ENCODE measurements at regions of chr13 and their contacts with region 1.

Region 1: DNA sequence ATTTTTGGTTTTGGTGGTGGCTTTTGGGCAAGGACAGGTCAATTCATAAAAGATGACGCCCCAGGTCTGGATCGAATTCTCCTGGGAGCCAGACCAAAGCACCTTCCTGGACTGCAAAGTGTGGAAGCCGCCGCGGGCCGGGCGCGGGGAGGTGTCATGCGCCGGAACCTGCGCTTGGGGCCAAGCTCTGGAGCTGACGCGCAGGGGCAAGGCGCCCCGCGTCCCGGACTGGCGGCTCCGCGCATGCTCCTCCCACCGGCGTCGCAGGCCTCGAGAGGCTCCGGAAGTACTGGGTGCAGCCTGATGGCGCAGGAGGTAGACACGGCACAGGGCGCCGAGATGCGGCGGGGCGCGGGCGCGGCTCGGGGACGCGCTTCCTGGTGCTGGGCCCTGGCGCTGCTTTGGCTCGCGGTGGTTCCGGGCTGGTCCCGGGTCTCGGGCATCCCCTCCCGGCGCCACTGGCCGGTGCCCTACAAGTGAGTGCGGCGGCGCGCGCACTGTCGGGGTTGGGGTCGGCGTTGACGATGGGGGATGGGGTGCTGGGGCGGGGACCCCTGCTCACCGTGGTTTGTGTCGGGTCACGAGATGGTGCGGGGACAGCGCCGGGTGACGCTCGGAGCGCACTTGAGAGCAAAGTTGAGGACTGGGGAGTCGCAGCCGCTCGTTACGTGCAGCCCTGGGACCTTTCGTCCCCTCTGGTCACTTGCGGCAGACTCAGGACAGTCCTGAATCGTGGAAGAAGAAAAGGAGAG is at the start of gene CLN5:
- DNase-seq: peak; percentile 85 to 98 (median 96)
- ATAC-seq: peak; percentile 90 to 95 (median 92)
- H3K4me3 ChIP-seq: peak within 1 kb of the TSS; percentile 79
- H3K4me3 Mint-ChIP-seq: peak within 1 kb of the TSS; percentile 91 to 97 (median 95)
- H3K27ac ChIP-seq: peak within 1 kb of the TSS; percentile 97
- H3K27ac Mint-ChIP-seq: peak within 1 kb of the TSS; percentile 98 to 99
- H3K4me1 ChIP-seq: peaks cover 20 to 23% of the 10 kb centered on the region in 2 experiments
- H3K4me1 Mint-ChIP-seq: peaks cover 33 to 55% (median 49%) of the 10 kb centered on the region in 3 donors
- H3K27me3 ChIP-seq: peaks cover 0 to 13% of the 10 kb centered on the region in 2 experiments
- H3K27me3 Mint-ChIP-seq: peaks cover under 1 to 5% of the 10 kb centered on the region in 2 donors
- total RNA-seq, gene CLN5: 18.1 to 29.5 (median 21.7) TPM

Region 2: DNA sequence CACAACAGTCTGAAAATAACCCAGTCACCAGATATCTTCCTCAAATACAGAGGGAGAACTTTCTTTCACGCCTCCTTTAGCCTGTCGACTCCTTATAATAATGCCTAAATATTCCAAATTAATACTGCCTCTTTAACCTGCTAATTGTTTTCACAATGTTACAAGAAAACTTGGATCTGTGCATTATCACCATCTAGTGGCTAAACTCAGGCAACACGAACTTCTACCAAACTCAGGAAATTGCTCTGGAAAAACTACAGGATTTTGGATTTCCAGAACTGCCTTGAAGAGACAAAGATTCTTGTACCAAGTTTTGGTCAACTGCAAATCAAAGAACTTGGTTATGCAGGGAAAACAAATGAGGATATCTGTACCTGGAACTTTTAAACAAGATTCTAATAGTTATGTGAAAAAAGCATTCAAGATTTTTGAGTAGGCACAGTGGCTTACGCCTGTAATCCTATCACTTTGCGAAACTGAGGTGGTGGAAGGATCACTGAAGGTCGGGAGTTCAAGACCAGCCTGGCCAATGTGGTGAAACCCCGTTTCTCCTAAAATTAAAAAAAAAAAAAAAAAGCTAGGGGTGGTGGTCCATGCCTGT is 10.7 kb after region 1 on chr13:
- CTCF ChIA-PET with region 1: interaction called, 3 to 23 read pairs
- POLR2A ChIA-PET with region 1: interaction called, 4 to 5 read pairs
- DNase-seq: peak in 1 of 35 experiments; percentile 47
- ATAC-seq: no peak
- H3K4me3 ChIP-seq: no peak overlapping the region
- H3K4me3 Mint-ChIP-seq: peak overlapping the region in 1 of 3 donors; percentile 22
- H3K27ac ChIP-seq: no peak overlapping the region
- H3K27ac Mint-ChIP-seq: peak overlapping the region; percentile 16 to 82
- H3K4me1 ChIP-seq: no peaks in the 10 kb centered on the region
- H3K4me1 Mint-ChIP-seq: peaks cover 33 to 52% (median 46%) of the 10 kb centered on the region in 3 donors
- H3K27me3 ChIP-seq: no peaks in the 10 kb centered on the region
- H3K27me3 Mint-ChIP-seq: no peaks in the 10 kb centered on the region

Region 3: DNA sequence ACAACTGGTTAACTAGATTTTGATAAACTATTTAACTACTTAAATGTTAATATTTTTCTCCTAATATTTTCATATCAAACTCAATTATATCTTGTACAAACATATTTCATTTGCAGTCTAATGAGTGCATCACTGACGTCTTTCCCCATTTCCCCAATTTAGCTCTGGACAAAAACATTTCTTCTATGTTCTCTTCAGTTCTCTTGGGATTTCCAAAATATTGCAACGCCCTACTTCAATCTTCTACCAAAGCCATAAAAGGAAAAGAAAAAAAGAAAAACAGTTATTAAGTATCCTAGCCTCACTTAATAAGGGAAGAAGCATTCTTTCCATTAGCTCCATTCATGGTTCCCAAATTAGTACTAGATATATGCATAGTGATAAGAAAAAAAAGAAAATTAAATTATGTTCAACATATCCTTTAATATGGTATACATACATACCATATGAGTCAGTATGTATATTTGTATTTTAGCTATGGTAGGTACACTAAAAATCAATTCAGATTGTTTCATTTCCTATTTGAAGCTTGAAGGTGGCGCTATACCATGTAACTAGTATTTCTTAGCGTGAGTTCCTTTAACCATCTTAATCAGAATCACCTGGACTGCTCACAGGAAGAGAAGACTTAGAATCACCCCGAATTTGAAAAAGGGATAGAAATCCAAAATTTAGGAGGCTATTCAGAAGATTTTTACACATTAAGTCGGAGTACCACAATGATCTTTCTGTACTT is 25.1 kb after region 1 on chr13:
- CTCF ChIA-PET with region 1: interaction called, 3 read pairs
- POLR2A ChIA-PET with region 1: interaction called, 4 to 11 read pairs
- DNase-seq: no peak
- ATAC-seq: no peak
- H3K4me3 ChIP-seq: no peak overlapping the region
- H3K4me3 Mint-ChIP-seq: no peak overlapping the region
- H3K27ac ChIP-seq: no peak overlapping the region
- H3K27ac Mint-ChIP-seq: peak overlapping the region; percentile 53 to 77
- H3K4me1 ChIP-seq: peaks cover under 1 to 12% of the 10 kb centered on the region in 2 experiments
- H3K4me1 Mint-ChIP-seq: peaks cover 70 to 77% (median 72%) of the 10 kb centered on the region in 3 donors
- H3K27me3 ChIP-seq: no peaks in the 10 kb centered on the region
- H3K27me3 Mint-ChIP-seq: no peaks in the 10 kb centered on the region

Region 4: GRCh38 chr13:77026818-77027585 is 35.0 kb after region 1 on chr13 and contains the start of gene FBXL3:
- CTCF ChIA-PET with region 1: interaction called in 1 of 2 experiments, 6 read pairs
- POLR2A ChIA-PET with region 1: interaction called, 4 to 48 read pairs
- DNase-seq: peak; percentile 72 to 91 (median 80)
- ATAC-seq: peak; percentile 71 to 78 (median 74)
- H3K4me3 ChIP-seq: peak within 1 kb of the TSS; percentile 59 to 80
- H3K4me3 Mint-ChIP-seq: peak within 1 kb of the TSS; percentile 97 to 99 (median 97)
- H3K27ac ChIP-seq: peak within 1 kb of the TSS; percentile 87
- H3K27ac Mint-ChIP-seq: peak within 1 kb of the TSS; percentile 95 to 98
- H3K4me1 ChIP-seq: peaks cover 20 to 26% of the 10 kb centered on the region in 2 experiments
- H3K4me1 Mint-ChIP-seq: peaks cover 52 to 58% (median 54%) of the 10 kb centered on the region in 3 donors
- H3K27me3 ChIP-seq: no peaks in the 10 kb centered on the region
- H3K27me3 Mint-ChIP-seq: no peaks in the 10 kb centered on the region
- total RNA-seq, gene FBXL3: 58.6 to 89.1 (median 80.0) TPM

Measured in T-cell (primary cell).